ENCODE measurements at regions of chr18 and their contacts with region 1.

Region 1: GRCh38 chr18:34661464-34662111 is 48.5 kb upstream of the DTNA start:
- DNase-seq: peak; percentile 39
- H3K4me3 ChIP-seq: no peak overlapping the region
- H3K27ac ChIP-seq: no peak overlapping the region
- H3K4me1 ChIP-seq: peaks cover 16% of the 10 kb centered on the region
- H3K27me3 ChIP-seq: no peaks in the 10 kb centered on the region
- CTCF ChIP-seq: peak; percentile 84 to 88

Region 2: DNA sequence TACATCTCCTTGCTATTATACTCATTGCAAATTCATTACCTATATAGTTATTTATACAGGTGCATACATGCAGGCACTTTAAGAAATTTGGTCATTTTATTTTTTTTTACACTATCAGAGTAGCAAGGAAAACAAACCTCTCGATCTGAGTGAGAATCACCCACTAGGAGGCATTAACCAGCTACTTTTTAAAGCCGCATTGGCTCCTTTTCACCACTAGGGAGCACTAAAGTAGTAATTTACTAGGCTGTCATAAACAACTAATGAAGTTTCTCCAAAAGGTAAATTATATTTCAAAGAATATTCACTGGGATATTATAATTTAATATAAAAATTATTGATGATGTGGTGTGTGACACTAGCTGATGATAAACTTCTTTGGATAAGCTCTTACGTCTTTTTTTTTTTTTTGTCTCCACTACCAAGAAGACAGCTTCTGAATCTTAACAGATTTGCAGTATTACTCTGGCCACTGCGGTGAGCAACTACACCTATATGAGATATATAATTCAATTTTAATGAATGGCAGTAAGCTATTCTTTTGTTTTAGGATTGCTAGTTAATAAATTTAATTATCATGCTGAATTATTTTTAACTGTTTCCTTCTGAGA is 538.8 kb before region 1 on chr18:
- CTCF ChIA-PET with region 1: no interaction called
- dilution Hi-C with region 1: no loop called
- in situ Hi-C with region 1: no loop called
- intact Hi-C with region 1: loop called (anchors 5 kb)
- DNase-seq: peak; percentile 34
- H3K4me3 ChIP-seq: no peak overlapping the region
- H3K27ac ChIP-seq: no peak overlapping the region
- H3K4me1 ChIP-seq: peaks cover 19% of the 10 kb centered on the region
- H3K27me3 ChIP-seq: no peaks in the 10 kb centered on the region
- CTCF ChIP-seq: peak; percentile 95 to 98

Region 3: DNA sequence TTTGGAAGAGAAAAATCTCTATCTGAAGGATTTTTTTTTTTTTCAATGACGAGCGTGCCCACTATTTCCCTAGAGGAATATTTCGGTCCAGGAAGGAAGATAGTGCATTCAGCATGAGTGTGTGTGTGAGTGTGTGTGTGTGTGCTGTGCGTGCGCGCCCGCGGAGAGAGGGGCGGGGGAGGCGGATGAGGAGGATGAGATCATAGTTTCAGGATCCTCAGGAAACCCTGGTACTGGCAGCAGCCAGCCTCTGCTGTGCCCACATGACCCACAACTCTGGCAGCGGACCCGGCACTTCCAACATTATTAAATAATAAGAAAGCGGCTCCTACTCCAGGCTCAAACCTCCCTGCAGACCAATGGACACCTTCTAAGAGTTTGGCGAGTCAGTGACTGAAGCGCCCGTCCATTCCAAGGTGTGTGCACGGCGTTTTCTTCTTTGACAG is 168.5 kb before region 1 on chr18:
- CTCF ChIA-PET with region 1: no interaction called
- dilution Hi-C with region 1: no loop called
- in situ Hi-C with region 1: no loop called
- intact Hi-C with region 1: loop called (anchors 5 kb)
- DNase-seq: peak; percentile 86
- H3K4me3 ChIP-seq: peak overlapping the region; percentile 45 to 63 (median 46)
- H3K27ac ChIP-seq: peak overlapping the region; percentile 15
- H3K4me1 ChIP-seq: no peaks in the 10 kb centered on the region
- H3K27me3 ChIP-seq: peaks cover 5% of the 10 kb centered on the region
- CTCF ChIP-seq: no peak

Region 4: DNA sequence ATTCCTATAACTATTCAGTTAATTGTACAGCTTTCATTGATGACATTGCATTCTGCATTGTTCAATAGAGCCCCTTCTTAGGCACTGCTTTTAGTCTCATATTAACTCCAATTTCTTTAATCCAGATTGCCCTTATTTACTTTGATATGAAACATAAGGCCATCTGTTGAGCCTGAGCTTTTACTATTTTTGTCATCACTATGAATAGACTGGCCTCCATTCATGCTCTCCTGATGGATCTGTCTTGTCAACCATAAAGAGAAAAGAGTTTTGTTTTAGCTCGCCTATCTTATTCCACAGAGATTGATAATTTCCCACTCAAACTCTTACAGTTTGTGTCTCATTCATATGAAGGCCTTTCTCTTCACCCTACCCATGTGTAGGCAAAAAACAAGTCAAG is 110.7 kb before region 1 on chr18:
- CTCF ChIA-PET with region 1: no interaction called
- dilution Hi-C with region 1: no loop called
- in situ Hi-C with region 1: no loop called
- intact Hi-C with region 1: no loop called
- DNase-seq: no peak
- H3K4me3 ChIP-seq: no peak overlapping the region
- H3K27ac ChIP-seq: no peak overlapping the region
- H3K4me1 ChIP-seq: no peaks in the 10 kb centered on the region
- H3K27me3 ChIP-seq: no peaks in the 10 kb centered on the region
- CTCF ChIP-seq: no peak

Region 5: GRCh38 chr18:34707670-34708069 is 46.1 kb after region 1 on chr18:
- CTCF ChIA-PET with region 1: interaction called, 9 read pairs
- dilution Hi-C with region 1: no loop called
- in situ Hi-C with region 1: no loop called
- intact Hi-C with region 1: loop called (anchors 1 kb)
- DNase-seq: peak; percentile 92
- H3K4me3 ChIP-seq: peak overlapping the region in 1 of 3 experiments; percentile 23
- H3K27ac ChIP-seq: peak overlapping the region; percentile 76
- H3K4me1 ChIP-seq: peaks cover 39% of the 10 kb centered on the region
- H3K27me3 ChIP-seq: no peaks in the 10 kb centered on the region
- CTCF ChIP-seq: no peak

Region 6: DNA sequence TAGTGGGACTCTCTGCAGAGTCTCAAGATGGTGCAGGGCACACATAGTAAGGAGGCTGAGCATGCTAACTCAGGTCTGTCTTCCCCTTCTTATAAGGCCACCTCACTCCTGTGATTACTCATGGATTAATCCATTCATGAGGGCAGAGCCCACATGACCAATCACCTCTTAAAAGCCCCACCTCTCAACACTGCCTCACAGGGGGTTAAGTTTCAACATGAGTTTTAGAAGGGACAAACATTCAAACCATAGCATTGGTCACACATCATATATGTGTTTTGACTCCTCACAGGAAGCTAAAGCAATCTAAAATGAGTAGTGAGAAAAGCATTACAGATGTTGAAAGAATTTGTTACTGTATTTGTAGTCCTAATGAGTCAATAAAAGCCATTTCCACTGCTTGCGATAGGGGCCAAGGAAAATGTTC is 106.0 kb after region 1 on chr18:
- CTCF ChIA-PET with region 1: interaction called, 3 read pairs
- dilution Hi-C with region 1: no loop called
- in situ Hi-C with region 1: no loop called
- intact Hi-C with region 1: loop called (anchors 5 kb)
- DNase-seq: peak; percentile 93
- H3K4me3 ChIP-seq: no peak overlapping the region
- H3K27ac ChIP-seq: peak overlapping the region; percentile 33
- H3K4me1 ChIP-seq: peaks cover 16% of the 10 kb centered on the region
- H3K27me3 ChIP-seq: no peaks in the 10 kb centered on the region
- CTCF ChIP-seq: no peak

Measured in mammary epithelial cell (primary cell).